PC-9 (cell line): ENCODE measurements at regions of chr10 and their contacts with region 1.

Region 1: DNA sequence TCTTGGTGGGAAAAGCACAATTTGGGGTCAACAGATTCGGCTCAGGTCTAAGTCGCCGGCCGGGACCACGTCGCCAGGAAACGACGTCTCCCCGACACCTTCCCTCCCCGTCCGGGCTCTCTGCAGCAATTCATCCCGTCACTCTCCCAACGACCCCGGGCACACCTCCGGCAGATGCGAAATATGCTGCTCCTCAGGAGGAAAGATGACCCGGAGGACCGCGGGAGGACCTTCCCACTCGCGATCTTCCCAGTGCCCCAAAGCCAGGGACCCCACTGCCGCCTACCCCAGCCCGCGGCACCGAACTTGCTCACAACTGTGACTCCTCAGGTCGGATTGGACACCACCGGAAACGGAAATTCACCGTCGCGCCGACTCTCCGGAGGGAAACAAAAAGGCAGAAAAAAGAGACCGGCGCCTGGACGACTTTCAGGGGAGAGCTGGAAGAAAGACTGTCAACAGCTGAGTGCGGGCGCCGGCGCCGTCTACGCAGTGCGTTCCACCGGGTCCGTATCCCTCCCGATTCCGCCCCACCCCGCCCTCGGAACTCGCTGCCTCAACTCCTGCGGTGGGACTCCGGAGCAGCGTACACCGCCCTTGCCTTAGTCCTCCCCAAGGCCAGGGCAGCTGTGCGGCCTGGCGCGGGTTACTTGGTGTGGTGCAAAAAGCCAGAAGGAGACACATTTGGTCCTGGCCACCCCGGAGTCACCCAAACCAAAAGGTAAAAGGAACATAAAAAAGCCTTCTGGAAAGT is 13.8 kb upstream of the SEC24C start:
- DNase-seq: peak; percentile 90 to 94
- H3K4me3 ChIP-seq: peak overlapping the region; percentile 79
- H3K27ac ChIP-seq: peak overlapping the region; percentile 59
- H3K4me1 ChIP-seq: peaks cover 15% of the 10 kb centered on the region
- H3K27me3 ChIP-seq: no peaks in the 10 kb centered on the region
- CTCF ChIP-seq: no peak

Region 2: GRCh38 chr10:73433538-73433867 is 296.8 kb before region 1 on chr10 and contains the start of gene MSS51:
- CTCF ChIA-PET with region 1: no interaction called
- POLR2A ChIA-PET with region 1: no interaction called
- intact Hi-C with region 1: no loop called
- DNase-seq: no peak
- H3K4me3 ChIP-seq: no peak within 1 kb of the TSS
- H3K27ac ChIP-seq: no peak within 1 kb of the TSS
- H3K4me1 ChIP-seq: no peaks in the 10 kb centered on the region
- H3K27me3 ChIP-seq: no peaks in the 10 kb centered on the region
- CTCF ChIP-seq: no peak
- total RNA-seq, gene MSS51: 2.4 and 3.3 TPM in 2 replicates

Region 3: GRCh38 chr10:73591935-73592699 is 138.2 kb before region 1 on chr10:
- CTCF ChIA-PET with region 1: no interaction called
- POLR2A ChIA-PET with region 1: no interaction called
- intact Hi-C with region 1: no loop called
- DNase-seq: peak; percentile 30 to 57
- H3K4me3 ChIP-seq: peak overlapping the region; percentile 28; the same call in 1 of the 2 replicates
- H3K27ac ChIP-seq: peak overlapping the region; percentile 84
- H3K4me1 ChIP-seq: peaks cover 60% of the 10 kb centered on the region
- H3K27me3 ChIP-seq: no peaks in the 10 kb centered on the region
- CTCF ChIP-seq: no peak

Region 4: GRCh38 chr10:73785221-73785720 is 54.9 kb after region 1 on chr10 and contains the start of gene ZSWIM8:
- CTCF ChIA-PET with region 1: no interaction called
- POLR2A ChIA-PET with region 1: no interaction called
- intact Hi-C with region 1: no loop called
- DNase-seq: peak; percentile 80 to 93
- H3K4me3 ChIP-seq: peak within 1 kb of the TSS; percentile 58
- H3K27ac ChIP-seq: 0 out of 2 replicates have a peak within 1 kb of the TSS, but pooled peaks have one; percentile 14
- H3K4me1 ChIP-seq: peaks cover 35% of the 10 kb centered on the region
- H3K27me3 ChIP-seq: no peaks in the 10 kb centered on the region
- CTCF ChIP-seq: no peak
- total RNA-seq, gene ZSWIM8: 49.2 and 70.0 TPM in 2 replicates

Region 5: GRCh38 chr10:73899423-73899822 is 169.1 kb after region 1 on chr10:
- CTCF ChIA-PET with region 1: no interaction called
- POLR2A ChIA-PET with region 1: interaction called, 12 read pairs
- intact Hi-C with region 1: no loop called
- DNase-seq: peak; percentile 87 to 99
- H3K4me3 ChIP-seq: peak overlapping the region; percentile 4; the same call in 1 of the 2 replicates
- H3K27ac ChIP-seq: peak overlapping the region; percentile 98
- H3K4me1 ChIP-seq: peaks cover 83% of the 10 kb centered on the region
- H3K27me3 ChIP-seq: no peaks in the 10 kb centered on the region
- CTCF ChIP-seq: no peak

Region 6: GRCh38 chr10:74275755-74276290 is 545.5 kb after region 1 on chr10:
- CTCF ChIA-PET with region 1: no interaction called
- POLR2A ChIA-PET with region 1: interaction called, 10 read pairs
- intact Hi-C with region 1: no loop called
- DNase-seq: no peak
- H3K4me3 ChIP-seq: no peak overlapping the region
- H3K27ac ChIP-seq: no peak overlapping the region; the same call in 1 of the 2 replicates
- H3K4me1 ChIP-seq: no peaks in the 10 kb centered on the region
- H3K27me3 ChIP-seq: no peaks in the 10 kb centered on the region
- CTCF ChIP-seq: no peak